ENCODE measurements at regions of chr1 and their contacts with region 1.

Region 1: DNA sequence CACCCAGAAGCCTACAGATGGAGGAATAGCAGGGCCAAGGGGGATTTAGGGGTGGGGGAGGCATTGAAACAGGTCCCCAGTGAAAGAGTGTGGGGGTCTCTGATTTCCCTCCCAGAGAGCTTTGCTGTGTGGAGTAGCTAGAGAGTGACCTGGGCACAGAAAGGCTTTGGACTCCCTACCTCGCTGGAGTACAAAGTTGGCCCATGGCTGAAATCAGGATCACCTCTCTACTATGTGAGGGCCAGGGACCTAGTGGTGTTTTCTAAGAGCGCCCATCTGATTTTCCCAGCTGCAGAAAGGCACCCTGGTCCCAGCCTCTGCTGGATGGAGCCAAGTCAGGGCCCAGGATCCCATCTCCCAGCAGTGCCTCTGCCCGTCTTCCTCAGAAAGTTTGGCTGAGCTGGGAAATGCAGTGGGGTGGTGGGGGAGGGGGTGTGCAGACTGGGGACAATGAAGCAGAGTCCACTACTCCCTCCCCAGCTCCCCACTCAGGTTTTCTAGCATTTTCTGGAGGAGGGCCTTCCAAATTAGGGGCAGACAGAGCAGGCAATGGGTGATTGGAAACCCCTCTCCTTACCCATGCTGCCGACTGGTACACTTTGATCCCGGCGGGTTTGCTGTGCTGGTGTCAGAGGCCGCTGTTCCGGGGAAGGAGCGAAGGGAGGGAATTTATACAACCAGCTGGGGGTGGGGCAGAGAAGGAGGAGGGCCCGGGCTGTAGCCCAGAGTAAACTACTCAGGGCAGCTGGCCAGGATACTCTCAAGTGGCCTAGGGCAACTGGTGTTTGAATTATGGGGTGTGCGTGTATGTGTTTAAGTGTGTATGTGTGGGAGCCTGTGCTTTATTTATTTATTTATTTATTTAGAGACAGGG is at the start of gene SELENBP1:
- DNase-seq: peak; percentile 73 to 84 (median 78)
- ATAC-seq: peak; percentile 86
- H3K4me3 ChIP-seq: peak within 1 kb of the TSS; percentile 49
- H3K27ac ChIP-seq: peak within 1 kb of the TSS; percentile 65
- H3K4me1 ChIP-seq: peaks cover 32 to 48% of the 10 kb centered on the region in 2 experiments
- H3K27me3 ChIP-seq: no peaks in the 10 kb centered on the region
- CTCF ChIP-seq: no peak
- EP300 ChIP-seq: no peak
- POLR2A ChIP-seq: peak; percentile 73
- RAD21 ChIP-seq: no peak
- polyA plus RNA-seq, gene SELENBP1: 52.1 to 81.2 TPM

Region 2: GRCh38 chr1:151287341-151287699 is 85.0 kb before region 1 on chr1:
- CTCF ChIA-PET with region 1: no interaction called
- POLR2A ChIA-PET with region 1: no interaction called
- in situ Hi-C with region 1: no loop called
- intact Hi-C with region 1: no loop called
- DNase-seq: no peak
- ATAC-seq: no peak
- H3K4me3 ChIP-seq: no peak overlapping the region
- H3K27ac ChIP-seq: no peak overlapping the region
- H3K4me1 ChIP-seq: peaks cover 15 to 48% of the 10 kb centered on the region in 2 experiments
- H3K27me3 ChIP-seq: no peaks in the 10 kb centered on the region
- CTCF ChIP-seq: no peak
- EP300 ChIP-seq: no peak
- POLR2A ChIP-seq: no peak
- RAD21 ChIP-seq: no peak

Region 3: DNA sequence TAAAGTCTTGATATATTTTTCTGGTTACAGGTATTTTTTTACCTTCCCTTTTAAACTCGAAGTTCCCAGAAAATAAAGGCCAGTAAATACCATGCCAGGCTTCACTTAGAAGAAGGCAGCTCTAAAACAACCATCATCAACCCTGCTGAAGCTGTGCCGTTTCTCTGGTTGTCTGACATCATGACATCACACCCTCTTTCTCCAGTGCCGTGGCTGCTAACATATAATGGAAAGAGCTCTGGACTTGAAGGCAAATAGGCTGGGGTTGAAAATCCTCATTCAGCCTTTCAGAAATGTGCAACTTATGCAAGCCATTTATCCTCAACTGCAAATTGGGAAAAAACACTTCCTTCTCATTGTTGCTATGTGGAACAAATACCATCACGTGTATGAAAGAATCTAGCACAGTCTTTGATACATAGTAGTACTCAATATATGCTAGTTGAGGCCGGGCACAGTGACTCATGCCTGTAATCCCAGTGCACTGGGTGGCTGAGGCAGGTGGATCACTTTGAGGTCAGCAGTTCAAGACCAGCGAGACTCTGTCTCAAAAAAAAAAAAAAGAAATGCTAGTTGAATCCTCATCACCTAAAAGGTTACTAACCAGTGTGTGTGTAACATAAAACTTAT is 53.4 kb before region 1 on chr1:
- CTCF ChIA-PET with region 1: no interaction called
- POLR2A ChIA-PET with region 1: no interaction called
- in situ Hi-C with region 1: no loop called
- intact Hi-C with region 1: no loop called
- DNase-seq: no peak
- ATAC-seq: no peak
- H3K4me3 ChIP-seq: no peak overlapping the region
- H3K27ac ChIP-seq: no peak overlapping the region
- H3K4me1 ChIP-seq: peaks cover 0 to 15% of the 10 kb centered on the region in 2 experiments; a peak in 3 of 5 replicates
- H3K27me3 ChIP-seq: no peaks in the 10 kb centered on the region
- CTCF ChIP-seq: no peak
- EP300 ChIP-seq: no peak
- POLR2A ChIP-seq: no peak
- RAD21 ChIP-seq: no peak

Region 4: DNA sequence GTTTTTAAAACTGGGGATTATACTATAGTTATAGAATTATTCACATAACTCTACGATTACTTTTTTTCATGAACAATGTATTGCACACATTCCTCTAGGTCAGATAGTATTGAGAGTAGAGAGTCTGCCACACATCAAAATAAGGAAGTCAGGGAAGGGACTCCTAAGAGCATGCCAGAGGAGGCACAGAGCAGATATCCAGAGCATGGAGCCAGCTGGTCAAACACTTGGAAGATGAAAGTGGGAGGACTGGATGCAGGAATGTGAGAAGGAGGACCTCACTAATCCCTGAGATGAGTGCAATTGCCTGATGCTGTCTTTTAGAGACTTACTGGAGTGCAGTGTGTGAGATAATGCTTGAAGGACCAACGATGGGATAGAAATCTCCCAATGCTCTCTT is 15.6 kb before region 1 on chr1:
- CTCF ChIA-PET with region 1: no interaction called
- POLR2A ChIA-PET with region 1: interaction called, 12 read pairs
- in situ Hi-C with region 1: no loop called
- intact Hi-C with region 1: no loop called
- DNase-seq: no peak
- ATAC-seq: no peak; the same call in 2 of the 3 replicates
- H3K4me3 ChIP-seq: no peak overlapping the region
- H3K27ac ChIP-seq: no peak overlapping the region
- H3K4me1 ChIP-seq: no peaks in the 10 kb centered on the region; a peak in 1 of 5 replicates
- H3K27me3 ChIP-seq: no peaks in the 10 kb centered on the region
- CTCF ChIP-seq: no peak
- EP300 ChIP-seq: no peak
- POLR2A ChIP-seq: no peak
- RAD21 ChIP-seq: no peak